HAP-1 (cell line): ENCODE measurements at regions of chr5 and their contacts with region 1.

Region 1: GRCh38 chr5:40688127-40688761 is 8.5 kb downstream of the PTGER4 start:
- DNase-seq: peak; percentile 78 to 85
- H3K4me3 ChIP-seq: no peak overlapping the region
- H3K4me1 ChIP-seq: peaks cover 4% of the 10 kb centered on the region; the same call in 1 of the 2 replicates
- H3K27me3 ChIP-seq: no peaks in the 10 kb centered on the region

Region 2: GRCh38 chr5:39599721-39600431 is 1088.4 kb before region 1 on chr5:
- in situ Hi-C with region 1: loop called (anchors 25 kb)
- DNase-seq: peak in 1 of 2 experiments; percentile 55
- H3K4me3 ChIP-seq: no peak overlapping the region
- H3K4me1 ChIP-seq: peaks cover 6% of the 10 kb centered on the region; the same call in 1 of the 2 replicates
- H3K27me3 ChIP-seq: no peaks in the 10 kb centered on the region

Region 3: GRCh38 chr5:39714036-39714698 is 974.1 kb before region 1 on chr5:
- in situ Hi-C with region 1: loop called (anchors 25 kb)
- DNase-seq: peak; percentile 58 to 68
- H3K4me3 ChIP-seq: no peak overlapping the region
- H3K4me1 ChIP-seq: peaks cover 3% of the 10 kb centered on the region
- H3K27me3 ChIP-seq: no peaks in the 10 kb centered on the region

Region 4: DNA sequence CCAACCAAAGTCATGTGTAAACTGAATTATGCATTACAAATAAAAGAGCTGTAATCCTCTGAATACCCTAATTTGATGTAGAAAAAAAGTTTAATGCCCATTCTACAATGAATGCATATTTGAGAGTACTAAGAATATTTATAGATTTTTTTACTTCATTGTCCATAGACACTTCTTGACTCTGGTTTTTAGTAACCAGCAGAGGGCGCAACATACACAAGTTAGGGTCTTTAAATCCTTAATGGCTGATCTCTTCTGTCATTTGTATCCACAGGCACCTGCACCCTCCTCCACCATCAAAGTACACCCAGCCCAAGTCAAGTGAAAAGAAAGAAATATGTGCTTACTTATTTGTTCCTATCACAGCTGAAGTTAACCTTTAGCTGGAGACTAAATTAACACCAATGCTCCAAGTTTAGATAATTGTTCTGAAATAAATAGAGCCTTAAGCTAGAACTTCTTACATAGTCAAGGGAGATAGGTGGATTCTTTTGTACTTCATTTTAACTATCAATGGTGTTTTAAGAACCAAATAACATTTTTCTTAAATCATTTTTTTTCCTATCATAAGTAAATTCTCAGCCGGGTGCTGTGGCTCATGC is 739.3 kb before region 1 on chr5:
- in situ Hi-C with region 1: loop called (anchors 25 kb)
- DNase-seq: peak; percentile 62 to 72
- H3K4me3 ChIP-seq: no peak overlapping the region
- H3K4me1 ChIP-seq: no peaks in the 10 kb centered on the region
- H3K27me3 ChIP-seq: no peaks in the 10 kb centered on the region